Esophagus muscularis mucosa (tissue), 4 donors: ENCODE measurements at regions of chr19 and their contacts with region 1.

Region 1: DNA sequence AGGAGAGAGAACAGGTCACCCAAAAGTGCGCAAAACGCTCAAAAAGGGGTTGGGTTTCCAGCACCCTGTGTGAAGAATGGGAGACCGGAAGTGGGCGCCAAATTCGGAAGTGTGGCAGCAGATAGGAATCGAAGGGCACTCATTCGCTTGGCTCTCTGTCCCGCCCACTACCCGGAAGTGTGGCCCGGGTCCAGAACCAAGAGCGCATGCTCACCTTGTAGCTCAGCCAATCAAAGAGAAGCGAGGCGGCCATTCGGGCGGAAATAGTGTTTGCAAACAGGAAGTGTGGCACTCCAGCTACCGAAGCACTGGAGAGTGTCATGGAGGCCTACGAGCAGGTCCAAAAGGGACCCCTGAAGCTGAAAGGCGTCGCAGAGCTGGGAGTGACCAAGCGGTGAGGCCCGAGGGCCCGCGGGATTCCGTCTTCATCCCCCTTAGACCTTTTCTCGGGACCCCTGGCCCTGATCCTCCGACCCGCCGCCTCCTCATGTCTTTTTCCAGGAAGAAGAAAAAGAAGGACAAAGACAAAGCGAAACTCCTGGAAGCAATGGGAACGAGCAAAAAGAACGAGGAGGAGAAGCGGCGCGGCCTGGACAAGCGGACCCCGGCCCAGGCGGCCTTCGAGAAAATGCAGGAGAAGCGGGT is at the start of gene FAM32A:
- DNase-seq: peak; percentile 100
- H3K4me3 ChIP-seq: peak within 1 kb of the TSS; percentile 76 to 93 (median 82)
- H3K27ac ChIP-seq: peak within 1 kb of the TSS; percentile 78 to 91 (median 84)
- H3K4me1 ChIP-seq: peaks cover 17 to 51% (median 45%) of the 10 kb centered on the region in 4 donors
- H3K27me3 ChIP-seq: peaks cover 0 to 10% (median 0%) of the 10 kb centered on the region in 4 donors
- CTCF ChIP-seq: peak; percentile 28 to 53 (median 46)
- EP300 ChIP-seq: no peak
- POLR2A ChIP-seq: no peak
- total RNA-seq, gene FAM32A: 83.5 to 104 (median 103) TPM

Region 2: DNA sequence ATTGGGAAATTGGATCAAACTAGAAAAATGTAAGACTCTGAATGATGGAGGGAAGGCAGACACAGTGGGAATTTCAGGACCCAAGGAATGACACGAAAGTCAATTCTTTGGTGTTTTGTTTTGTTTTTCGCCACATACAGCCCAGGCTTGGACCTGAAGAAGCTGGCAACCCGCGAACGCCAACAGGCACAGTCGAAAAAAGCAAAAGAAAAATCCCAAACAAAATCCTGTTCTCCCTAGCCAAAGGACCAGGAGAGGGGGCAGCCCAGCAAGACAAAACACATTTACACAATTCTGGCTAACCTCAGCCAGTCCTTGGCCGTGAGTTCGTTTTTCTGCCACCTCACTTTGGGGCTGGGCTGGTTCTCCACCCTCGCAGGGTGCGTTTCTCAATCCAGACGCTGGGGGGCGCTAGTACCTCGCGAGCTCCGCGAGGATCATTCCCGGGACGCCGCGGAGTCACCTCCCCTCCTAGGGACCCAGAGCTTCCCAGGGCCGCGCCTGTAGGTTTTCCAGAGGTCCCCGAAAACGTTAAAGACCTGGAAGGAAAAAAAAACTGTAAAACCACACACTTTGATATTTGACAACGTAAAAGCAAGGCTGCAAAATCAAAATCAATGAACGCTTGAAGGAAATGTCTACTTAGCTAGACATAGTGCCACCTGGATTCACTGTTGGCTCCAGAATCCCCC is 143.8 kb before region 1 on chr19:
- intact Hi-C with region 1: loop called (anchors 1 kb)
- DNase-seq: no peak
- H3K4me3 ChIP-seq: peak overlapping the region; percentile 20 to 47 (median 30)
- H3K27ac ChIP-seq: peak overlapping the region; percentile 30 to 45 (median 35)
- H3K4me1 ChIP-seq: peaks cover 7 to 10% (median 9%) of the 10 kb centered on the region in 4 donors
- H3K27me3 ChIP-seq: peaks cover 0 to 4% (median 0%) of the 10 kb centered on the region in 4 donors
- CTCF ChIP-seq: peak in 2 of 3 experiments; percentile 98 to 99
- EP300 ChIP-seq: no peak
- POLR2A ChIP-seq: no peak

Region 3: GRCh38 chr19:16244091-16244490 is 58.8 kb after region 1 on chr19:
- intact Hi-C with region 1: no loop called
- DNase-seq: no peak
- H3K4me3 ChIP-seq: no peak overlapping the region
- H3K27ac ChIP-seq: no peak overlapping the region
- H3K4me1 ChIP-seq: peaks cover 11 to 15% (median 12%) of the 10 kb centered on the region in 4 donors
- H3K27me3 ChIP-seq: no peaks in the 10 kb centered on the region
- CTCF ChIP-seq: no peak
- EP300 ChIP-seq: no peak
- POLR2A ChIP-seq: no peak

Region 4: DNA sequence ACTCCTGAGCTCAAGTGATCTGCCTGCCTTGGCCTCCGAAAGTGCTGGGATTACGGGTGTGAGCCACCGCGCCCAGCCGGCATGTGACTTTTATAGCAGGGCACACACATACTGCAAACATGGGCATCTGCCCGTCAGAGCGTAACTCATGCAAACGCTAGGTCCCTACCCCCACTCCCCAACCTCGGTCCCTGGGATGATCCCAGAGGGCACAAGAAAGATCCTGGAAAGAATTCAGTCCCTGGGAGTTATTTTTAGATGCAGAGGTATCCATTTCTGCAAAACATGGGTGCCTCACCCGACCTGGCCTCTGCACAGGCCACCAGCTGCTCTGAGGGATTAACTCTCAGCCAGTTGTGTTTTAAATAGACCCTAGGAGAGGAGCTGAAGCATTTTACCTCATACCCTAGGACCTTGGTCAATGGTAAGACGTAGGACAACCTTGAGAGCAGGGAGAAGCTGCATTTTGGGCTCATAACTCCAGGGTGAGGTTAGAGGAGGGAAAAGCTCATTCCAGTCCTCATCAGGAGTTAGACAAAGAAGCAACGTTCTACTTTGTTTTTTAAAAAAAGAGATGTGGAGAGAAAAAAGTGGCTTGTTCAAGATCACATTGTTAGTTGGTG is 486.5 kb after region 1 on chr19:
- intact Hi-C with region 1: no loop called
- DNase-seq: no peak
- H3K4me3 ChIP-seq: no peak overlapping the region
- H3K27ac ChIP-seq: peak overlapping the region in 1 of 4 donors; percentile 14
- H3K4me1 ChIP-seq: peaks cover 7 to 9% (median 9%) of the 10 kb centered on the region in 4 donors
- H3K27me3 ChIP-seq: no peaks in the 10 kb centered on the region
- CTCF ChIP-seq: no peak
- EP300 ChIP-seq: no peak
- POLR2A ChIP-seq: no peak